Transverse colon (tissue), 4 donors: ENCODE measurements at regions of chr1 and their contacts with region 1.

Region 1: DNA sequence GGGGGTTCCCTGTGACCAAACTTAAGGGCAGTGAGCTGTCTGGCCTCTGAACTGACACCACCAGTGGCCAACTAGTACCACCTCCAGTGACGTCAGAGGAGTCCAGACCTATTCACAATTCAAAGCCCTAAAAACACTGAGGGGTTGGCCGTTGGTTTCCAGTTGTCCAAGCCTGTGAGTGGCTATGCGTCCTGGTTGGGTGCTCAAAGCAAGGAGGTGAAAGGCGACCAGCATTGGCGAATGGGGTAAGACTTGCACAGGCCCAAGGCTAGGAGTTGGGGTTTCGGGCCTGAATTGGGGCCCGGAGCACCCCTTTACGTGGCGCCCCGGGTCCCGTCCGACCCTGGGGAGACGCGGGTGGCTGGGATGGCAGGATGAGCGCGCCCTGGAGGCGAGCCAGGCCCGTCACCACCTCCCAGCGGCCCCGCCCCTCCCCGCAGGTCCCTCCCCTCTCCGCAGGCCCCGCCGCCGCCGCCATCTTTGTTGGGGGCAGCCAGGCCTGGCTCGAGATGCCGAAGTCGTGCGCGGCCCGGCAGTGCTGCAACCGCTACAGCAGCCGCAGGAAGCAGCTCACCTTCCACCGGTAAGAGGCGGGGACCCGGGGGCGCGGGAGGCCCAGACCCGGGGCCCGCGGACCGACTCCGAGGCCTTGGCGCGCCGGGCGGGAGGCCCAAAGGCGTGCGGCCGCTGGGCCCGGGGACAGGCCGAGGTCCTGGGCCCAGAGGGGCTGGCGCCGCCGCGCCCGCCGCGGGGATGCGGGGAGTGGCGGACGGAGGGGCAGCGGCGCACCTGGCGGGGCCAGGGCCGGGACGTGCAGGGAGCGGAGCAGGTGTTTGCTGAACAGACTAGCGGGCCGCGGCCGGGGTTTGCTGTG is at the start of gene THAP3:
- DNase-seq: peak; percentile 92
- H3K4me3 ChIP-seq: peak within 1 kb of the TSS; percentile 67 to 91 (median 84)
- H3K27ac ChIP-seq: peak within 1 kb of the TSS; percentile 90 to 94 (median 92)
- H3K4me1 ChIP-seq: peaks cover 10 to 22% (median 17%) of the 10 kb centered on the region in 4 donors
- H3K27me3 ChIP-seq: no peaks in the 10 kb centered on the region
- CTCF ChIP-seq: no peak
- EP300 ChIP-seq: no peak
- POLR2A ChIP-seq: peak; percentile 6
- total RNA-seq, gene THAP3: 7.5 to 21.0 (median 13.2) TPM

Region 2: DNA sequence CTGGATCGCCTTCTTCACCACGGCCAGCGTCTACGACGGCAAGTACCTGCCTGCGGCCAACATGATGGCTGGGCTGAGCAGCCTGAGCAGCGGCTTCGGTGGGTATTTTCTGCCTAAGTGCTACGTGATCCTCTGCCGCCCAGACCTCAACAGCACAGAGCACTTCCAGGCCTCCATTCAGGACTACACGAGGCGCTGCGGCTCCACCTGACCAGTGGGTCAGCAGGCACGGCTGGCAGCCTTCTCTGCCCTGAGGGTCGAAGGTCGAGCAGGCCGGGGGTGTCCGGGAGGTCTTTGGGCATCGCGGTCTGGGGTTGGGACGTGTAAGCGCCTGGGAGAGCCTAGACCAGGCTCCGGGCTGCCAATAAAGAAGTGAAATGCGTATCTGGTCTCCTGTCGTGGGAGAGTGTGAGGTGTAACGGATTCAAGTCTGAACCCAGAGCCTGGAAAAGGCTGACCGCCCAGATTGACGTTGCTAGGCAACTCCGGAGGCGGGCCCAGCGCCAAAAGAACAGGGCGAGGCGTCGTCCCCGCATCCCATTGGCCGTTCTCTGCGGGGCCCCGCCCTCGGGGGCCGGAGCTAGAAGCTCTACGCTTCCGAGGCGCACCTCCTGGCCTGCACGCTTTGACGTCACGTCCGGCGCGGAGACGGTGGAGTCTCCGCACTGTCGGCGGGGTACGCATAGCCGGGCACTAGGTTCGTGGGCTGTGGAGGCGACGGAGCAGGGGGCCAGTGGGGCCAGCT is 45.4 kb before region 1 on chr1 and contains the start of gene ZBTB48:
- in situ Hi-C with region 1: loop called in 1 of 4 experiments (anchors 10 kb)
- intact Hi-C with region 1: no loop called
- DNase-seq: peak; percentile 100
- H3K4me3 ChIP-seq: peak within 1 kb of the TSS; percentile 55 to 99 (median 84)
- H3K27ac ChIP-seq: peak within 1 kb of the TSS; percentile 89 to 98 (median 96)
- H3K4me1 ChIP-seq: peaks cover 17 to 37% (median 35%) of the 10 kb centered on the region in 4 donors
- H3K27me3 ChIP-seq: no peaks in the 10 kb centered on the region
- CTCF ChIP-seq: no peak
- EP300 ChIP-seq: no peak
- POLR2A ChIP-seq: peak; percentile 96
- total RNA-seq, gene ZBTB48: 18.3 to 37.7 (median 30.5) TPM

Region 3: DNA sequence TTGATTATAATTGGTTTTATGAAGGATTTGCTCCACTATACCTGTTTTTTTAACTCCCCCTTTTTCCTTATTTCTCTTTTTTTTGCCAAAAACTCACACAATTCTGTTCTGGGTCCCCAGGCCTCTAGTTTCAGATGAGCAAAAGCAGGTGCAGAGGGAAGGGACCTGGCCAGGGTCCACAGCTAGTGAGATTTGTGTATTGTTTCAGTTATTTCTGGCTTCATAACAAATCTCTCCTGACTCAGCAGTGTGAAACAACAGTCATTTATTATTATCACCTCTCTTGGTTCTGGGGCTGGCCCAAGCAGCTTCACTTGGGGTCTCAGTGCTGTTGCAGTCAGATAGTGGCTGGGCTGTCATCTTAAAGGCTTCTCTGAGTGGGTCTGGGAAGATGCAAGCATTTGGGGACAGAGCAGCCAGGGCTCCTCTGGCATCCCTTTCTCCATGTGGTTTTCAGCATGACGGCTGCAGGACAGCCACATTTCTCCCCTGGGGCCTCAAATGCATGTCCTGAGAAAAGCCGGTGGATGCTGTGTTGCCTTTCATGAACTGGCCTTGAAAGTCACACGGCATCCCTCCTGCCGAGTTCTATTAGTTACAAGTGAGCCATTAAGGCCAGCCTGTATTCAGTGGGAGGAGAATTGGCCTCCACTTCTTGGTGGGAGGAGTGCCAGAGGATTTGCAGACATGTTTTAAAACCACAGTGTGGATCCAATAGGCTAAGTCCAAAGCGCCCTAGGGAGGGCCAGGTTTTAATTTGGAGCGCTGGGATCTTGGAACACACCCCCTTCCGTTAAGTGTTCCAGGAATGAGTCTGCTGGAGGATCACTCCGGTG is 297.4 kb after region 1 on chr1:
- in situ Hi-C with region 1: no loop called
- intact Hi-C with region 1: no loop called
- DNase-seq: peak; percentile 34
- H3K4me3 ChIP-seq: no peak overlapping the region
- H3K27ac ChIP-seq: peak overlapping the region in 3 of 4 donors; percentile 38 to 76 (median 50)
- H3K4me1 ChIP-seq: peaks cover 0 to 14% (median 7%) of the 10 kb centered on the region in 4 donors
- H3K27me3 ChIP-seq: no peaks in the 10 kb centered on the region
- CTCF ChIP-seq: no peak
- EP300 ChIP-seq: no peak
- POLR2A ChIP-seq: no peak